H1 (cell line): ENCODE measurements at regions of chr5 and their contacts with region 1.

Region 1: DNA sequence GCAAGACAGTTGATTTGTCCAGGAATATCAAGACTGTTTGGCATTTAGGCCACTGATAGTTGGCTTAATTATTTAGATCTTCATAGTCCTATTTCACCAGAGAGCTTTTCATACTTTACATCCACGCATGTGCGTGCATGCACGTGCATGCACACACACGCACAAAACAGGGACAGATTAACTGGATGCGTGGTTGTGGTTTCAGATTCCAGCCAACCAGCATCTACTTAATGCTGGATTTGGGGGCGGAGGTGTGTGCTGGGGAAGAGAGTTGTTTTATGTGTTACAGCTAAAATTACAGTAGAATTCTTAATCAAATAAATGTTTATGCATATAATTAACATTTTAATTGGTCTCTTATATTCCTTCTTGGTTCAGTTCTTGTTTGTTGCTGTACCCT is 7.3 kb downstream of the RNF14 start:
- DNase-seq: no peak
- H3K4me3 ChIP-seq: no peak overlapping the region
- H3K27ac ChIP-seq: no peak overlapping the region
- H3K4me1 ChIP-seq: no peaks in the 10 kb centered on the region
- H3K27me3 ChIP-seq: no peaks in the 10 kb centered on the region
- CTCF ChIP-seq: no peak
- EP300 ChIP-seq: no peak
- POLR2A ChIP-seq: no peak
- RAD21 ChIP-seq: no peak

Region 2: DNA sequence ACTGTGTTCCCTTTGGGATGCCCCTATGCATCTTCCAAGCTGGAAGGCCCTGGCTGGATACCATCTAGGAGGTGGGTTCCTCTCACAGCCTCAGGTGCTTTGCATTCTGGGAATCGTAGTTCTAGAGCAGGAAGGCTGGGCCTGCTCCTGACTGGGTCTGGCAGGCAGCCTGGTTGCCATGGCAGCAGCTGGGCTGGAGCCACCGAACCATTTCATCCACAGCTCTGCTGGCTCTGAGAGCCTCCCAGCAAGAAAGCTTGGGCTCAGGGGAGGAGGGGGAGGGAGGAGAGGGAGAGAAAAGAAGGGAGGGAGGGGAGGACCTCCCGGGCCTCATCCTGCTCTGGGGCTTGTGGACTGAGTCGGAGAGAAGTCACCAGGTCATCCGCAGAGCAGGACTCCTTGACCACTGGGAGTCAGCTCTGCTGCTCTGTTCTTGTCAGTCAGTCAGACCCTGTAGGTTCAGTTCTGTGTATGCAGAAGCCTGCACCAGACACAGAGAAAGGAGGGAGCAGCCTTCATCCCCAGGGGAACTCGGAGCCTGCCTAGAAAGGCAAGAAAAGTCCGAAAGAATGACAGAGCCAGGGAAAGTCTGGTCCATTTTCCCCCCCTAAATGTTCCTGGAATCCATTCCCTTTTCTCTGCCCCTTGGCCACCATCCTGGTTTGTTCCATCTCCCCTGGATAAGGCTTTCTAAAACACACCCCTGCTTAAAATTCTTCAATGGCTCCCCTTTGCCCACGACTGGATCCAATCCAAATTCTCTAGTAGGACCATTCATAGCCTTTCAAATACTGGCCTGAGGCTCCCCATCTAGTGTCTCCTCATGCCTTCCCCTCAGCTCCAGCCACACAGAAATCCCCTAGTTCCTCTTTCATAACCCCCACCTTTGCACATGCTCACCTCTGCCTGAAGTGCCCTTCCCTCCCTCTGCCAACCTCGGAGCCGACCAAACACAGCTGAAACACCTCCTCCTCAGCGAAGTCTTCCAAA is 228.7 kb before region 1 on chr5:
- CTCF ChIA-PET with region 1: no interaction called
- POLR2A ChIA-PET with region 1: no interaction called
- DNase-seq: peak; percentile 50 to 80
- H3K4me3 ChIP-seq: no peak overlapping the region; a peak in 1 of 8 replicates
- H3K27ac ChIP-seq: no peak overlapping the region
- H3K4me1 ChIP-seq: peaks cover 0 to 9% (median 5%) of the 10 kb centered on the region in 4 experiments; a peak in 5 of 7 replicates
- H3K27me3 ChIP-seq: peaks cover 4 to 10% (median 4%) of the 10 kb centered on the region in 4 experiments
- CTCF ChIP-seq: no peak
- EP300 ChIP-seq: no peak
- POLR2A ChIP-seq: no peak
- RAD21 ChIP-seq: no peak

Region 3: DNA sequence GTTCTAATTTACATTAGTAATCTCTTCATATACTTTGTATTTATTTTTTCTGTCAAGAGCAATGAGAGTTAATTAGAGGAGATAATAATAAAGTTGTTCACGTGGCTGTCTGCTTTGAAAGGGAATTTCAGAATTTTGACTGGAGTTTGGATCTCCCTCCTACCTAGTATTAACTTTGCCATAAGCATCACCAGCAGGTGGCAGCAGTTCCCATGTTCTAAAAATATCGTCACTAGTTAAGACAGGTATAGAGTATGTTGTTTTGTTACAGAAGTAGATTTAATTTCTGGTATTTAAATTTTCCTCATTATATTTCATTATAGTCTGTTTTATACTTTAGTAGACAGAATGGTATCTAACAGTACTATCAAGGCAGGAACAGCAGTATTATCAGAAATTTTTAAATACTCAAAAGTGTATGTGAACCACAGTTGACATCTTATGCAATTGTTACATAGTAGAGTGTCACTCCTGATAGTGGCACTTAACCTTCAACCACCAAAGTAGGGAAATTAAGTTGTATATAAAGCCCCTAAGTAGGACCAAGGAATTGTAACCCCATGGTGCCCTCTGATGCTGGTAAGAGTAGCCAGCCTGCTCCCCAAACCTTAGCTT is 16.3 kb after region 1 on chr5:
- CTCF ChIA-PET with region 1: interaction called, 40 read pairs
- POLR2A ChIA-PET with region 1: no interaction called
- DNase-seq: peak in 1 of 2 experiments; percentile 79
- H3K4me3 ChIP-seq: no peak overlapping the region
- H3K27ac ChIP-seq: no peak overlapping the region
- H3K4me1 ChIP-seq: no peaks in the 10 kb centered on the region
- H3K27me3 ChIP-seq: no peaks in the 10 kb centered on the region
- CTCF ChIP-seq: peak in 2 of 3 experiments; percentile 49 to 69; a peak in 2 of 4 replicates
- EP300 ChIP-seq: no peak
- POLR2A ChIP-seq: no peak
- RAD21 ChIP-seq: peak; percentile 55 to 66